MCF 10A (cell line): ENCODE measurements at regions of chr18 and their contacts with region 1.

Region 1: DNA sequence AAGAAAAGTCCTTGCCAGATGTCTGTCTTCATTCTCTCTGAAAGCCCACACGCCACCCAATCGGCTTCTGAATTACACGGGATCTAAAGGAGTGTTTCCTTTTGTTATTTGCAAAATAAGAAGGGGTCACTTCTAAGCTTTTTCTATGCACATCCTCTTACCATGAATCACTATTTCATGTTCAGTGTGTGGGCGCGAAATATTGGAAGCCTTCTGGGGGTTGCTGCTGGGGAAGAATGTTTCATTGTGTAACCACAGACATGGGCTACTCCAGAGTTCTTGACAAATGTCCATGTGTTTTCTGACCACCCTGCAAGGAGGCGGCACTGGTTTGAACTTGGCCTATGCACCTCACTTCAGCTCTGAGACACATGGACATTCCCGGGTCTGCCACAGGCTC is 133.6 kb upstream of the APCDD1 start:
- DNase-seq: peak; percentile 13
- H3K4me3 Mint-ChIP-seq: no peak overlapping the region
- H3K27ac Mint-ChIP-seq: no peak overlapping the region
- H3K4me1 Mint-ChIP-seq: peaks cover 18% of the 10 kb centered on the region
- H3K27me3 Mint-ChIP-seq: no peaks in the 10 kb centered on the region
- CTCF ChIP-seq: no peak

Region 2: DNA sequence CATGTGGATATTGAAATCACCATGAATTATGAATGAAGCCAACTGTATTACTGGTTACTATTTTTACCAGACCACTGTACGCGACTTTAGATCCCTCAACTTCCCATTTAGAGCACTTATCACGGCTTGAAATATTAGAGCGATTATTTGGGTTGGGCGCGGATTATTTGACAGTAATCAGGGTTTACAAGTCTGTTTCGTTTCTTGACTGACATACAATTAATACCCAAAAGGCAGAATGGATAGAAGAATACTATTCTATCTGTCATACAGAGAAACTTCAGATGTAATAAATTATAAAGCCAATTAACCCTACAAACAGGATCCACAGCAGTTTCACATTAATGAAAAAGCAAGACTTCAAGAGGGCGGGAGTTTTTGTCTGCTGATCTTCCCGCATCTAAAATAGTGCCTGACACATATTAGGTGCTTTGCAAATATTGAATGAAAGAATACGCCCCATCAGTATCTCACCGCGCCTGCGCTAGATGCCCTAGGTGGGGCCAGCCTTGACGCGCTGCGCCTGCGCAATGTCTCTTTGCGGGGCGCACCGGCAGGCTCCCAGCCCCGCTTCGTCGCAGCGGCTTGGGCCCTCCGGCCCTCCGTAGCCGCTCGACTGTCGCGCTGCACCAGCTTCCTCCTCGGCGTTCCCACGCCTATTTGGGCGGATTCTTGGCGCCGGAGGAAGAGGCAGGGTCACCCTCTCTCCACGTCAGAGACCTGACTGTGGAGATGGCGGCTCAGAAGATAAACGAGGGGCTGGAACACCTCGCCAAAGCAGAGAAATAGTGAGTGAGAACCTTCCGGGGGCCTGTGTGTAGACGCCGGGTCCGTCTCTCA is 204.8 kb after region 1 on chr18 and contains the start of gene NAPG:
- CTCF ChIA-PET with region 1: no interaction called
- POLR2A ChIA-PET with region 1: no interaction called
- intact Hi-C with region 1: loop called (anchors 10 kb)
- DNase-seq: peak; percentile 89
- H3K4me3 Mint-ChIP-seq: peak within 1 kb of the TSS; percentile 91
- H3K27ac Mint-ChIP-seq: peak within 1 kb of the TSS; percentile 95
- H3K4me1 Mint-ChIP-seq: peaks cover 24% of the 10 kb centered on the region
- H3K27me3 Mint-ChIP-seq: no peaks in the 10 kb centered on the region
- CTCF ChIP-seq: no peak
- total RNA-seq, gene NAPG: 31.8 and 32.2 TPM in 2 replicates